Posterior cingulate gyrus (tissue), 11 donors: ENCODE measurements at regions of chr6 and their contacts with region 1.

Region 1: GRCh38 chr6:131694831-131695426 is 6.3 kb downstream of the OR2A4 start:
- DNase-seq: peak in 4 of 10 donors; percentile 37 to 47 (median 38)

Region 2: GRCh38 chr6:131331151-131331550 is 363.8 kb before region 1 on chr6:
- intact Hi-C with region 1: no loop called
- DNase-seq: no peak

Region 3: DNA sequence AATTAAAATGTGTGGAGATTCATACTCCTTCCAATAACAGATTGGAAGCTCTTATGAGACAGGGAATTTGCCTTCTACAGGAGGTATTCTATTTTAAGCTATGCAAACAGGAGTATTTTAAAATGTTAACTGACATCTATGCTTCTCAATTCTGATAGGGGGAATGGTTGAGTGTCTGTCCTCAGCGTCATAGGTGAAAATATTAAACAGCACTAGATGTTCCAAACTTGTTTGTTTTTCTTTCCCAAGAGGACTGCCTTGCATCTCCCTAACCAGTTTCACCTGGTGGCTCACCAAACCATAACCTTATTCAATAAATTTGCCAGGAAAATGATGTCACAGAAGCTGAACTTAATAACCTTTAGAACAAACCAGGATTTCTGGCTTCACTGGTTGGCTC is 146.5 kb before region 1 on chr6:
- intact Hi-C with region 1: no loop called
- DNase-seq: no peak

Region 4: DNA sequence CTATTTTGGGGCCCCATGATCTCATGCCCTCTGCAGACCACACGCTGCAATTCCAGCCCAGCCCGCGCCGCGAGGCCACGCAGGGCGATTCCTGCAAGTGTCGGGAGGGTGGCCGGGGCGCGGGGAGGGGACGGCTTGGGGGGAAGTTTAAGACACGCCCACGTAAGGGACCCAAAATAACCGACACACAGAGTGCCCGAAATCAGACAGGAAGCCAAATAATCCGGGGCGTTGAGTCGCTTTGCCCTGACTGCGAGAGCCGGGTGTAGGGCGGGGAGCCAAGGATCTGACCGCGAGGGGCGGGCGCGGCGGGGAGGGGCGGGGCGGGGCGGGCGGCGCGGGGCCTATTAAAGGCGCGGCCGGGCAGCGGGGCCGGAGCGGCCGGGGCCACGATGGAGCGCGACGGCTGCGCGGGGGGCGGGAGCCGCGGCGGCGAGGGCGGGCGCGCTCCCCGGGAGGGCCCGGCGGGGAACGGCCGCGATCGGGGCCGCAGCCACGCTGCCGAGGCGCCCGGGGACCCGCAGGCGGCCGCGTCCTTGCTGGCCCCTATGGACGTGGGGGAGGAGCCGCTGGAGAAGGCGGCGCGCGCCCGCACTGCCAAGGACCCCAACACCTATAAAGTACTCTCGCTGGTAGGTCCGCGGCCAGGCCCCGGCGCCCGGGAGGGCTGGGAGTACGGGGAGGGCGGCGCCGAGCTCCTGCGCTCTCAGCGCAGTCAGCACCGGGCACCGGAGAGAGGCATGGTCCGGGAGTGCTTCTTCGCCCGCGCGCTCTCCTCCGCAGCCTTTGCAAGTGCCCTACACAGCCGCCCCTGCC is 112.9 kb after region 1 on chr6 and contains the start of gene ENPP1:
- intact Hi-C with region 1: loop called (anchors 5 kb)
- DNase-seq: peak; percentile 59 to 94 (median 71)

Region 5: DNA sequence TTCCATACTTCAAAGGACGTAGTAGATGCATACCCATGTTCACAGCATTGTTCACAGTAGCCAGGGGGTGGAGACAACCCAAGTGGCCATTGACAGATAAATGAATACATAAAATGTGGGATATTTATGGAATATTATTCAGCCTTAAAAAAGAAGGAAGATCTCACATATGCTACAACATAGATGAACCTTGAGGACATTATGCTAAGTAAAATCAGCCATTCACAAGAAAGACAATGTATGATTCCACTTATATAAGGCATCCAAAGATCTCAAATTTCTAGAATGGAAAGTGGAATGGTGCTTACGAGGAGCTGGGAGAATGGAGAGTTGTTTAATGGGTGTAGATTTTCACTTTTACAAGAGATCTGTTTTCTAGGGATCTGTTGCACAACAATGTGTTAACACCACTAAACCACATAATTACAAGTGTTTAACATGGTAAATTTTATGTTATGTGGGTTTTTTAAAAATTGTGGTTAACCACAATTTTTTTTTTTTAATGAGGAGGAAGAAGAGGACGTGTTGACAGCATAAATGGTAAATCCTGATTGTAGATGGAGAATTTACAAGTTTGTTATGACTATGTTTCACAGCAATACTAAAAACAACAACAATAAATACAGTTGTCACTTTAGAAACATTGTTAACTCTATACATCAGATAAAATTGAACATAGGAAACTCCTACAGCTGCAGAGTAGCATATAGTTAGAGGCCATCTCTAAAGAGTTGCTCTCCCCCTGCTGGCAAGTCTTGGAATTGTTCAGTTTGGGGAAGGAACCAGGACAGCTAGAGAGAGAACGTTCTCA is 214.7 kb after region 1 on chr6:
- intact Hi-C with region 1: loop called (anchors 1 kb)
- DNase-seq: peak in 7 of 10 donors; percentile 59 to 89 (median 79)